SK-N-SH (cell line): ENCODE measurements at regions of chr10 and their contacts with region 1.

Region 1: GRCh38 chr10:78742730-78743615 is 325.8 kb upstream of the ZMIZ1 start:
- DNase-seq: peak; percentile 84
- H3K4me3 ChIP-seq: no peak overlapping the region
- H3K27ac ChIP-seq: peak overlapping the region in 1 of 2 experiments; percentile 99; a peak in 2 of 4 replicates
- H3K4me1 ChIP-seq: peaks cover 0 to 85% of the 10 kb centered on the region in 2 experiments; a peak in 2 of 4 replicates
- H3K27me3 ChIP-seq: no peaks in the 10 kb centered on the region
- CTCF ChIP-seq: no peak
- EP300 ChIP-seq: peak; percentile 21 to 99; a peak in 3 of 4 replicates
- RAD21 ChIP-seq: peak; percentile 51

Region 2: GRCh38 chr10:78754270-78755062 is 11.5 kb after region 1 on chr10:
- CTCF ChIA-PET with region 1: interaction called, 7 read pairs
- POLR2A ChIA-PET with region 1: interaction called, 10 read pairs
- DNase-seq: peak; percentile 68
- H3K4me3 ChIP-seq: no peak overlapping the region
- H3K27ac ChIP-seq: peak overlapping the region; percentile 90 to 94
- H3K4me1 ChIP-seq: peaks cover 37 to 46% of the 10 kb centered on the region in 2 experiments; a peak in 3 of 4 replicates
- H3K27me3 ChIP-seq: no peaks in the 10 kb centered on the region
- CTCF ChIP-seq: no peak
- EP300 ChIP-seq: peak in 1 of 2 experiments; percentile 82; a peak in 2 of 4 replicates
- RAD21 ChIP-seq: no peak; the same call in 1 of the 2 replicates